CD4-positive, alpha-beta memory T cell (primary cell): ENCODE measurements at regions of chr10 and their contacts with region 1.

Region 1: DNA sequence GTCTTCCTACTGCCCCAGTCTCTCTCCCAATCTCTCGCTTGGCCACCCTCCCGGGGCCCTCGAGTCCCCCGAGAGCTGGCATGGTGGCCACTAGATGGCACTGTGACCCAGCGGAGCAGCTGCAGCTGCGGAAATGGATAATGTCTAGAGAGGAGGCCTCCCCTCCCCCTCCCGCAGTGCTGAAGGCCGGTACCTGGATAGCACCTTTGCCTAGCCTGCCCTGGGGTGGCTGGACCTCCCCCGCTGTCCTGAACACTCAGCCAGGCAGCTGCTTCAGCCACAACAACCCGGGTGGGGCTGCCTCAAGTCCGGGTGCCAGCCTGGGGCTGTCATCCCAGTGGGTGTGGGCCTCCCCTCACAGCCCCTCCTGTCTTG is 65.2 kb downstream of the GOLGA7B start:
- DNase-seq: peak; percentile 53 to 61 (median 57)
- H3K4me3 ChIP-seq: no peak overlapping the region
- H3K4me3 Mint-ChIP-seq: peak overlapping the region in 1 of 8 donors; percentile 8
- H3K27ac ChIP-seq: no peak overlapping the region
- H3K27ac Mint-ChIP-seq: no peak overlapping the region
- H3K4me1 ChIP-seq: peaks cover 13% of the 10 kb centered on the region
- H3K4me1 Mint-ChIP-seq: peaks cover 4 to 14% (median 8%) of the 10 kb centered on the region in 4 donors
- H3K27me3 ChIP-seq: no peaks in the 10 kb centered on the region
- H3K27me3 Mint-ChIP-seq: peaks cover 7 to 15% of the 10 kb centered on the region in 2 donors

Region 2: DNA sequence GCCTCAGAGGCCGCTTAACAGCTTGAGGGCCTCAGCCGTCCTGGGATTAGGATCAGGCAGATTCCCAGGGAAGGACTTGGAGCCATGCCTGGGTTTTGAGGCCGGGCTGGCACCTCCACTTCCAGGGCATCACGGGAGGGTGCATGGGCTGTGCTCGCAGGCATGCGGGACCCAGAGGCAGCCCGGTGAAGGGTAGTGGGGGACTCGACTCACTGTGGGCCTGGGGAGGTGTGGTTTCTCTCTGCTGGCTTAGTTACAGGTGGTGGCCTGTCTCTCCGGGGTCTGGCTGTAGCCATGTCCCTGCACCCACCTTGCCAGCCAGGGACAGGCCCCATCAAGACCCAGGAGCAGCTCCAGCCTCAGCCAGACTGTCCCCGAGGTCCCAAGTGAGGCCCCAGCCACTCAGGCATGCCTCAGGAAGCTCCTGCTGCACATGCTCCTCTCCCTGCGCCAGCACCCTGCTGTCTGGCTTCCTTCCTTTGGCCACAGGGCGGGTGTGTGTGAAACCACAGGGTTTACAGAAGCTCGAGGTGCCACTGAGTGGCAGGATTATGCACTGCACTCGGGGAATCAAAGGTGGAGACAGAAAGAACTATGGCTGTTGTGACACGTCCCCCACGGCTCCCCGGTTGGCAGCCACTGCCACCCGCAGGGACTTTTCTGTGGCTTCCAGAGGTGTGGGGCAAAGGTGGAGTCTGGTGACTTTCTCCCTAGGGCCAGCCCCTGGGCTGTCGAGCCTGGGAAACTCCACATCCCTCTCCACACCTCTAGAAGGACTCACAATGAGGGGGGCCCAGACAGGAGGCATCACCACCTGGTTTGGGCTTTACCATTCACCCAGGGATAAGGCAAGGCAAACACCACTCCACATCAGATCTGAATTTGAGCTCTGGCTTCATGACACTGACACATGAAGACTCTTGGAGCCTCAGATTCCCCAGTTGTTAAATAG is 45.5 kb before region 1 on chr10:
- CTCF ChIA-PET with region 1: no interaction called
- POLR2A ChIA-PET with region 1: no interaction called
- intact Hi-C with region 1: no loop called
- DNase-seq: peak; percentile 82 to 87 (median 83)
- H3K4me3 ChIP-seq: no peak overlapping the region
- H3K4me3 Mint-ChIP-seq: peak overlapping the region in 4 of 8 donors; percentile 4 to 64 (median 41)
- H3K27ac ChIP-seq: no peak overlapping the region
- H3K27ac Mint-ChIP-seq: peak overlapping the region; percentile 55 to 87 (median 71)
- H3K4me1 ChIP-seq: peaks cover 16% of the 10 kb centered on the region
- H3K4me1 Mint-ChIP-seq: peaks cover 6 to 14% (median 12%) of the 10 kb centered on the region in 4 donors
- H3K27me3 ChIP-seq: no peaks in the 10 kb centered on the region
- H3K27me3 Mint-ChIP-seq: no peaks in the 10 kb centered on the region

Region 3: DNA sequence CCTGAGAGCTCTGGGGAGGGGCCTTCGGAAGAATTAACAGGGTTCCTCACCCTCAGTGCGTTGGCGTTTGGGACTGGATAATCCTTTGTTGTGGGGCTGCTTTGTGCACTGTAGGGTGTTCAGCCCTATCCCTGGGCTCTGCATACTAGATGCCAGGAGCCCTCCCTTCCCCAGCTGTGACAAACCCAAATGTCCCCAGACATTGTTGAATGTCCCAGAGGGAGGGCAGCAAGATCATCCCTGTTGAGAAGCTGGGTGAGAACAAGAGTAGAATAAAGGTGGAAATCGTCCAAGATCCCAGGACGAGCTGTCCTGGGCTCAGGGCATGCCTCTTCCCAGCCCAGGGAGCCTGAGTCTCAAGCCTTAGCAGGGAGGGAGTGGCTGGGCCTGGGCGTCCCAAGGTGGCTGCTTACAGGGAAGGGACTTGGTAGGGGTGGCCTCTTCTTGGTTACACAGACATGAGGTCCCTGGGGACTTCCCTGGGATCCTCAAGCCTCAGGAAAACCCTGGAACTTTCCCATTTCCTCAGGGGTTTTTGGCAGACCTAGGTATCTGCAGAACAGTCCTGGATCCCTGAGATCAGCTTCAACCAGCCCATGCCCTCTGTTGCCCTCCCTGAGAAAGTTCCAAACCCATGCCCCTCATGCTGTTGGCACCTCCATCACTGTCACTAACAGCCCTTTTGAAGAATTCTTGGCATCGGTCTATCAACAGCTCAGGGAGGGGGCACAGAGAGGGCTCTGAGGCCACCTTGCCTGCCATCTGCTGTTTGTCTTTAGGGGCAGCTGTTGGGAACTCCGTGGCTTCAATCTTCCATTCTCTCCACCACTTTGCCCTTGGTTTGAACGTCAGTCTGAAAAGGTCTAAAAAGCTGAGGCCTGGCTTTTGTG is 11.5 kb before region 1 on chr10:
- CTCF ChIA-PET with region 1: interaction called, 33 read pairs
- POLR2A ChIA-PET with region 1: no interaction called
- intact Hi-C with region 1: no loop called
- DNase-seq: no peak
- H3K4me3 ChIP-seq: no peak overlapping the region
- H3K4me3 Mint-ChIP-seq: no peak overlapping the region
- H3K27ac ChIP-seq: no peak overlapping the region
- H3K27ac Mint-ChIP-seq: peak overlapping the region in 1 of 7 donors; percentile 26
- H3K4me1 ChIP-seq: no peaks in the 10 kb centered on the region
- H3K4me1 Mint-ChIP-seq: no peaks in the 10 kb centered on the region
- H3K27me3 ChIP-seq: no peaks in the 10 kb centered on the region
- H3K27me3 Mint-ChIP-seq: peaks cover 7 to 16% of the 10 kb centered on the region in 2 donors

Region 4: DNA sequence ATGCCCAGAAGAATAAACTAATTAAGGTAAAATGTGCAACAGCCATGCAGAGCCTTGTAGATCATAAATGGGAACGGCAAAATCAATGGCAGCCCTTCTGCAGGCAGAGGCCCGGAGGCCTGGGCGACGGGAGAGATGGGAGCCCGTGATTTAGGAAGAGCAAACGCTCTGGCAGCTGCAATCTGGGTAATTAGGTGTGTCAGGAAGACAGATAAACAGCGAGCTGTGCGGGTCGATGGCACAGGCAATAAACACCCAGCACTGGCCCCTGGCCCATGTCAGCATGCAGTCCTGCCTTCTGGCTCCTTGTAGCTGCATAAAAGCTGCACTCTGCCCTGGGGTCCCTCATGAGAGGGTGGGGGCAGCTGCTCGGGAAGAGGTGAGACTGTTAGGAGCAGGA is 12.8 kb after region 1 on chr10:
- CTCF ChIA-PET with region 1: interaction called, 12 read pairs
- POLR2A ChIA-PET with region 1: no interaction called
- intact Hi-C with region 1: no loop called
- DNase-seq: no peak
- H3K4me3 ChIP-seq: no peak overlapping the region
- H3K4me3 Mint-ChIP-seq: peak overlapping the region in 1 of 8 donors; percentile 6
- H3K27ac ChIP-seq: no peak overlapping the region
- H3K27ac Mint-ChIP-seq: no peak overlapping the region
- H3K4me1 ChIP-seq: no peaks in the 10 kb centered on the region
- H3K4me1 Mint-ChIP-seq: peaks cover 0 to 3% (median 0%) of the 10 kb centered on the region in 4 donors
- H3K27me3 ChIP-seq: no peaks in the 10 kb centered on the region
- H3K27me3 Mint-ChIP-seq: peaks cover 16 to 39% of the 10 kb centered on the region in 2 donors

Region 5: GRCh38 chr10:98045785-98046389 is 131.1 kb after region 1 on chr10:
- CTCF ChIA-PET with region 1: interaction called, 103 read pairs
- POLR2A ChIA-PET with region 1: no interaction called
- intact Hi-C with region 1: loop called (anchors 1 kb)
- DNase-seq: peak; percentile 46 to 54 (median 47)
- H3K4me3 ChIP-seq: no peak overlapping the region
- H3K4me3 Mint-ChIP-seq: no peak overlapping the region
- H3K27ac ChIP-seq: no peak overlapping the region
- H3K27ac Mint-ChIP-seq: no peak overlapping the region
- H3K4me1 ChIP-seq: no peaks in the 10 kb centered on the region
- H3K4me1 Mint-ChIP-seq: peaks cover 0 to 5% (median 3%) of the 10 kb centered on the region in 4 donors
- H3K27me3 ChIP-seq: peaks cover 2% of the 10 kb centered on the region
- H3K27me3 Mint-ChIP-seq: peaks cover 25 to 35% of the 10 kb centered on the region in 2 donors

Region 6: DNA sequence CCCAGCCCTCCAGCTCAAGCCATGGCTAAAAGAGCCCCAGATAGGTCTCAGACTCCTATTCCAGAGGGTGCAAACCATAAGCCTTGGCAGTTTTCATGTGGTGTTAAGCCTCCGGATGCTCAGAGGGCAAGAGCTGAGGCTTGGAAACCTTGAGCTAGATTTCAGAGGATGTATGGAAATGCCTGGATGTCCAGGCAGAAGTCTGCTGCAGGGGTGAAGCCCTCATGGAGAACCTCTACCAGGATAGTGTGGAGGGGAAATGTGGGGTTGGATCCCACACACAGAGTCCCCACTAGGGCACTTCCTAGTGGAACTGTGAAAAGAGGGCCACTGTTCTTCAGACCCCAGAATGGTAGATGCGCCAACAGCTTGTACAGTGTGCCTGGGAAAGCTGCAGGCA is 1334.0 kb after region 1 on chr10:
- CTCF ChIA-PET with region 1: interaction called, 3 read pairs
- POLR2A ChIA-PET with region 1: no interaction called
- intact Hi-C with region 1: loop called (anchors 5 kb)
- DNase-seq: no peak
- H3K4me3 ChIP-seq: no peak overlapping the region
- H3K4me3 Mint-ChIP-seq: no peak overlapping the region
- H3K27ac ChIP-seq: no peak overlapping the region
- H3K27ac Mint-ChIP-seq: no peak overlapping the region
- H3K4me1 ChIP-seq: no peaks in the 10 kb centered on the region
- H3K4me1 Mint-ChIP-seq: no peaks in the 10 kb centered on the region
- H3K27me3 ChIP-seq: no peaks in the 10 kb centered on the region
- H3K27me3 Mint-ChIP-seq: peaks cover 15 to 22% of the 10 kb centered on the region in 2 donors